ENCODE measurements at regions of chr5 and their contacts with region 1.

Region 1: DNA sequence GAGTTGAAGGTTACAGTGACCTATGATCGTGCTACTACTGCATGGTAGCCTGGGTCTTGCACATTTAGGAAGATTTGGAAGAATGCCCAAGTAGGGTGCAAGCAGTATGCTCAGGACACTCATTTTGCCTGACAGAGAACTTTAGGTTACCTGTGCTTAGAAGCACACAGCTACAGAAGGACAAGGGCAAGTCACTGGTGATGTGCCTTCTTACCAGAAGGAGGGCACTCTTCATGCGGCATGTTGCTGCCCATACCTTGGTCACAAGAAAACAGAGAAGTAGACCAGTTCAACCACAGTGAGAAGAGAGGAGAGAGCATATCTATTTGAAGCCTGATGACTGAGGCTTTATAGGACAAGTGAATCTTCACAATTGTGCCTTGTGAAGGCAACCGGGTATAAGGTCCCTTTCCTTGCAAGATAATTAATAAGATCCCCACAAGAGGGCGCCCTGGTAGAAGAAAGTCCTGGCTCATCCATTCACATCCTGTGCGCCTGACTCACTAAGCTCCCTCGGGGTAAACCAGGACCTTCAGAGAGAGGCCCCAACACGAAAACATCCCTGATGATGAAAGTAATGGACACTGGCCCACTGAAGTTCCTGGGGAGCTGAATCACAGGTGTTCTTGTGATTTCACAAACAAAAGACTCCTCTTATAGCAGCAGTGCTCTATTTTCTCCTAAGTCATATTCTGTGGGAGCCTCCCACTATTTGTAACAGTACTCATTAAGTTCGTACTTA is 38.1 kb upstream of the STARD4 start:
- DNase-seq: peak; percentile 63
- ATAC-seq: peak; percentile 97
- H3K4me3 ChIP-seq: no peak overlapping the region
- H3K27ac ChIP-seq: no peak overlapping the region
- H3K4me1 ChIP-seq: no peaks in the 10 kb centered on the region
- H3K27me3 ChIP-seq: no peaks in the 10 kb centered on the region
- CTCF ChIP-seq: peak; percentile 77
- EP300 ChIP-seq: no peak
- POLR2A ChIP-seq: no peak
- RAD21 ChIP-seq: peak; percentile 64

Region 2: GRCh38 chr5:111820072-111820471 is 269.6 kb after region 1 on chr5:
- CTCF ChIA-PET with region 1: no interaction called
- POLR2A ChIA-PET with region 1: no interaction called
- in situ Hi-C with region 1: no loop called
- intact Hi-C with region 1: loop called (anchors 1 kb)
- DNase-seq: peak; percentile 11
- ATAC-seq: peak; percentile 38; the same call in 1 of the 3 replicates
- H3K4me3 ChIP-seq: no peak overlapping the region
- H3K27ac ChIP-seq: no peak overlapping the region
- H3K4me1 ChIP-seq: no peaks in the 10 kb centered on the region
- H3K27me3 ChIP-seq: no peaks in the 10 kb centered on the region
- CTCF ChIP-seq: peak; percentile 55
- EP300 ChIP-seq: no peak
- POLR2A ChIP-seq: no peak
- RAD21 ChIP-seq: no peak

Region 3: GRCh38 chr5:112036206-112036605 is 485.8 kb after region 1 on chr5:
- CTCF ChIA-PET with region 1: no interaction called
- POLR2A ChIA-PET with region 1: no interaction called
- in situ Hi-C with region 1: no loop called
- intact Hi-C with region 1: no loop called
- DNase-seq: no peak
- ATAC-seq: no peak
- H3K4me3 ChIP-seq: no peak overlapping the region
- H3K27ac ChIP-seq: no peak overlapping the region
- H3K4me1 ChIP-seq: no peaks in the 10 kb centered on the region
- H3K27me3 ChIP-seq: no peaks in the 10 kb centered on the region
- CTCF ChIP-seq: no peak
- EP300 ChIP-seq: no peak
- POLR2A ChIP-seq: no peak
- RAD21 ChIP-seq: no peak